ENCODE measurements at regions of chr10 and their contacts with region 1.

Region 1: DNA sequence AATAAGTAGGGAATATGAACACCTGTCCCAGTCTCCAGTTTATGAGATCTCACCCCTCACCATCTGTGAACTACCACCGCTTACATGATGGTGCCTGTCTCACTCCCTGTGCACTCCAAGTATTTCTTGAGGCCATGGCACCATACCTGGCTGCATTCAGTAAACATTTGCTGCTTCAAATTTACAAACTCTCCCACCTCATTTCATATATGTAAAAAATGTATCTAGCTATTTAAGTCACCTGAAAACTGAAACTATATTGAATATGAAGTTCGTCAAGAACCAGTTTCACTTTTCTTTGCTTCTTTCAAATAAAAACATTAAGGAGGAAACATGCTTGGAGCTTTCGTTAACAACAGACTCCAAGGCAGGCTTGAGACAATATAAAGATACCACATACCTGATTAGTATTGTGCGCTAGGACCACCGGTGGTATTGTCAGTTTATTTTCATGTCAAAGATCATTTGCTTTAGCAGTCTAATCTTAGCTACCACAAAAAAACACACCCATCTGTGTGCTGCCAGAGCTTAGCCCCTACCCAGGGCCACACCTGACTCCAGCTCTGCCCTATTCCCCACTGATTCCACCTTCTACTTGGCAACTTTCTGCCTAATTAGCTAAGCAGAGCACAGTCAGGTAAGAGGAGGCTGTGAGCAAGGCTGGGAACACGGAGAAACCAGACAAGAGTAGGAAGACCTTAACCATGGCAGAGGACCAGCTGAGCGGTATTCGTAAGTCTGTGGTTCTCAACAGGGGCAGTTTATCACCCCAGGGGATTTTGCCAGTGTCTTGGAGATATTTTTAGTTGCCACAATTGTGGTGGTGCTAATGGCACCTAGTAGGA is 92.0 kb downstream of the ZFAND4 start:
- DNase-seq: peak in 2 of 4 experiments; percentile 27 to 38
- ATAC-seq: peak; percentile 72
- H3K4me3 ChIP-seq: peak overlapping the region; percentile 8; the same call in 1 of the 2 replicates
- H3K27ac ChIP-seq: peak overlapping the region; percentile 62
- H3K4me1 ChIP-seq: peaks cover 6 to 29% of the 10 kb centered on the region in 2 experiments
- H3K27me3 ChIP-seq: no peaks in the 10 kb centered on the region
- CTCF ChIP-seq: no peak
- EP300 ChIP-seq: no peak
- POLR2A ChIP-seq: no peak
- RAD21 ChIP-seq: no peak

Region 2: DNA sequence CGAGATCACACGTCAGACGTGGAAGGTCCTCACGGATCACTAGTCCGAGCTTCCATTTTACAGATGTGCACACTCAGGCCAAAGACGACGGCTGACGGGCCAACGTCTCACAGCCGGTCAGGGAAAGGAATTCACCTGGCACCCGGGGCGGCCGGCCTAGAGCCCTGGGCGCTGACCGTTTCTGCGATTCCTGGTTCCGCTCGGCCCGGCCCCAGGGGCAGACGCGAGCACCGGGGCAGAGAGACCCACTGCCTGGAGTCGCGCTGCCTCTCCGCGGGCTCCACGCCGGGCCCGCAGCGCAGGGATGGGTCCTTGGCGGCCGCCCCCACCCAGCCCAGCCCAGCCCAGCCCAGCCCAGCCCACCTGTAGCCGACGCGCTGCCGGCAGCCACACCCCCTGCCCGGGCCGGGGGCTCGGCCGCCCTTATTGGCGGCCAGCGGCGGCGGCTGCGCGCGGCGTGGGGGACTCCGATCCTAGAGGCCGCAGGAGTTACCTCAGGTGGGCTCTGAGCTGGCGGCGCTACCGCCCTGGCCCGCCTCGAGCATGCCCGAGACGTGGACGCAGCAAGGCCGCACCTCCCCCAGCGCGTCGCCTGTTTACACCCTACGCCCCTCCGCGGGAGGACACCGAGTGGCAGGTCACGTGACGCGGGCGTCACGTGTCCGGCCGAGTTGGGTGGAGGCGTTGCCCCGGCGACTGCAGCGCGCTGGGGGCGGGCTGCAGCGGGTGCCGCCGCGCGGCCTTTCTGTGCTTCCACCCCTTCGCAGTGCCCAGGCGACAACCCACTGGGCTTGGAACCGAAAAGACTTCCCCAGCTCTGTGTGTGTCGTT is 13.9 kb after region 1 on chr10:
- CTCF ChIA-PET with region 1: no interaction called
- POLR2A ChIA-PET with region 1: interaction called, 22 read pairs
- in situ Hi-C with region 1: no loop called
- intact Hi-C with region 1: no loop called
- DNase-seq: peak; percentile 95 to 98 (median 98)
- ATAC-seq: peak; percentile 92
- H3K4me3 ChIP-seq: peak overlapping the region; percentile 57
- H3K27ac ChIP-seq: peak overlapping the region; percentile 70
- H3K4me1 ChIP-seq: peaks cover 5 to 8% of the 10 kb centered on the region in 2 experiments; a peak in 2 of 5 replicates
- H3K27me3 ChIP-seq: no peaks in the 10 kb centered on the region
- CTCF ChIP-seq: peak in 1 of 3 experiments; percentile 16; a peak in 1 of 6 replicates
- EP300 ChIP-seq: peak; percentile 61; the same call in 1 of the 2 replicates
- POLR2A ChIP-seq: peak; percentile 66
- RAD21 ChIP-seq: peak; percentile 34 to 41

Measured in K562 (cell line).